B cell (primary cell): ENCODE measurements at regions of chr11 and their contacts with region 1.

Region 1: DNA sequence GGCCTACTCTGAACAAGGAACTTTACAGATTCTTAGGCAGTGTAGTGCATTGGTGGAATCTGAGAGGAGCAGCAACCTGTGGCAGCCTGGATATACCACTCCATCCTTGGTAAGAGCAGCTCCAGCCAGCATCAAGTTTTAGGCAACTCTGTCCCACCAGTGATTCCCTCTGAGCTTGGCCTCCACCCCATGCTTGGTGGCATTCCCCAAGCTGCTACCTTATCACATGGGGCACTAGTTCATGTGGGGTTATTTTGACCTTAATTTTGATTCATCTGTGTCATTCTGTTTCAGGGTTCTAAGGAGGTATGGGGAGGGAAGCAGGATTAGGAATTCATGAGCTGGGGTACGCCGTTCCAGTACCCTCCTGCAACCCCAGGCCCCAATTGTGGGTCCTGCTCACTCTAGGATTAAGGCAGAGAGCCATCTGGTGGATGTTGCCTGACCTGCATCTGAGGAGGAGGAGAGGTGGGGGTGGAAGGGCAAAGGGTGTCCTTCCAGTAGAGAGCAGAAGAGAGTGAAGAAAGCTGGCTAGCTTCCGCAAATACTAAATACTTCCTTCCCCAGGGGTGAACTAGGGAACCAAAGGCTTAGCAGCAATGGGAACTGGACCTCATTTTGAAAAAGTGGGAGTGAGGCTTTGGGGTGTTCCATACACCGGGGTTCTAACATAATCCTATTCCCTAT is 10.5 kb downstream of the LRRC51 start:
- DNase-seq: peak; percentile 85
- ATAC-seq: peak; percentile 99
- H3K4me3 ChIP-seq: no peak overlapping the region
- H3K4me3 Mint-ChIP-seq: no peak overlapping the region
- H3K27ac ChIP-seq: peak overlapping the region; percentile 7 to 25
- H3K27ac Mint-ChIP-seq: peak overlapping the region; percentile 73
- H3K4me1 ChIP-seq: peaks cover 7 to 14% of the 10 kb centered on the region in 2 donors
- H3K4me1 Mint-ChIP-seq: peaks cover 16% of the 10 kb centered on the region
- H3K27me3 ChIP-seq: no peaks in the 10 kb centered on the region
- H3K27me3 Mint-ChIP-seq: no peaks in the 10 kb centered on the region
- CTCF ChIP-seq: peak; percentile 82

Region 2: DNA sequence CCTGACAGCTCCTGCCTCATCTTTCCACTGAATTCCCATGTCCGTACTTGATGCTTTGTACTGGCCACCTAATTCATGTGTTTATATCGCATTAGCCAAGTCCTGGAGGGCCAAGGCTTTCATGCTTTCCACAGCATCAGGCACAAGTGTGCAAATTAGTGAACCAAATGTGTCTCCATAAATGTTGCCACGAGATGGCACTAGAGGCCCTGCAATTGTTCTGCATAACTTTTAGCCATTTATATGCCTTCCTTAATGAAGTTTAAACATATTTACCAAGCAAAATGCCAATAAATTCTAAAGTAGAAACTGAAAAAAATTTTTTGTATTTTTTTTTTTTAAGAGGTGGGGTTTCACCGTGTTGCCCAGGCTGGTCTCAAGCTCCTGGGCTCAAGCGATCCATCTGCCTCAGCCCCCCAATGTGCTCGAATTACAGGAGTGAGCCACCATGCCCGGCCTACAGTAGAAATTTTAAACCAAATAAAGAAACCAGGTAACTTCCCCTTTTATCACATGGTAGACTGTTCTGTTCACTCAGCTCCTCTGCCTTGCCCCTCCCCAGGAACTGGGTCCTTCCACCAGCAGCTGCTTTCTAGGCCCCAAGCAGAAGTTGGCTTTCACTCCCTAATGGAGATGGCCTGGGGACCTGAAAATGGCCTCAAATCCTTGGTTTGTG is 113.3 kb before region 1 on chr11:
- CTCF ChIA-PET with region 1: interaction called, 37 read pairs
- POLR2A ChIA-PET with region 1: no interaction called
- intact Hi-C with region 1: loop called (anchors 1 kb)
- DNase-seq: peak; percentile 86
- ATAC-seq: peak; percentile 96
- H3K4me3 ChIP-seq: no peak overlapping the region
- H3K4me3 Mint-ChIP-seq: peak overlapping the region; percentile 38
- H3K27ac ChIP-seq: peak overlapping the region; percentile 64 to 72
- H3K27ac Mint-ChIP-seq: peak overlapping the region; percentile 93
- H3K4me1 ChIP-seq: peaks cover 17 to 25% of the 10 kb centered on the region in 2 donors
- H3K4me1 Mint-ChIP-seq: peaks cover 25% of the 10 kb centered on the region
- H3K27me3 ChIP-seq: no peaks in the 10 kb centered on the region
- H3K27me3 Mint-ChIP-seq: no peaks in the 10 kb centered on the region
- CTCF ChIP-seq: peak; percentile 82

Region 3: GRCh38 chr11:72040726-72041441 is 50.3 kb before region 1 on chr11:
- CTCF ChIA-PET with region 1: interaction called, 292 read pairs
- POLR2A ChIA-PET with region 1: interaction called, 4 read pairs
- intact Hi-C with region 1: no loop called
- DNase-seq: peak; percentile 73
- ATAC-seq: peak; percentile 50
- H3K4me3 ChIP-seq: peak overlapping the region; percentile 72 to 86 (median 83)
- H3K4me3 Mint-ChIP-seq: no peak overlapping the region
- H3K27ac ChIP-seq: peak overlapping the region; percentile 72 to 92
- H3K27ac Mint-ChIP-seq: no peak overlapping the region
- H3K4me1 ChIP-seq: peaks cover 45 to 54% of the 10 kb centered on the region in 2 donors
- H3K4me1 Mint-ChIP-seq: peaks cover 30% of the 10 kb centered on the region
- H3K27me3 ChIP-seq: no peaks in the 10 kb centered on the region
- H3K27me3 Mint-ChIP-seq: no peaks in the 10 kb centered on the region
- CTCF ChIP-seq: no peak

Region 4: DNA sequence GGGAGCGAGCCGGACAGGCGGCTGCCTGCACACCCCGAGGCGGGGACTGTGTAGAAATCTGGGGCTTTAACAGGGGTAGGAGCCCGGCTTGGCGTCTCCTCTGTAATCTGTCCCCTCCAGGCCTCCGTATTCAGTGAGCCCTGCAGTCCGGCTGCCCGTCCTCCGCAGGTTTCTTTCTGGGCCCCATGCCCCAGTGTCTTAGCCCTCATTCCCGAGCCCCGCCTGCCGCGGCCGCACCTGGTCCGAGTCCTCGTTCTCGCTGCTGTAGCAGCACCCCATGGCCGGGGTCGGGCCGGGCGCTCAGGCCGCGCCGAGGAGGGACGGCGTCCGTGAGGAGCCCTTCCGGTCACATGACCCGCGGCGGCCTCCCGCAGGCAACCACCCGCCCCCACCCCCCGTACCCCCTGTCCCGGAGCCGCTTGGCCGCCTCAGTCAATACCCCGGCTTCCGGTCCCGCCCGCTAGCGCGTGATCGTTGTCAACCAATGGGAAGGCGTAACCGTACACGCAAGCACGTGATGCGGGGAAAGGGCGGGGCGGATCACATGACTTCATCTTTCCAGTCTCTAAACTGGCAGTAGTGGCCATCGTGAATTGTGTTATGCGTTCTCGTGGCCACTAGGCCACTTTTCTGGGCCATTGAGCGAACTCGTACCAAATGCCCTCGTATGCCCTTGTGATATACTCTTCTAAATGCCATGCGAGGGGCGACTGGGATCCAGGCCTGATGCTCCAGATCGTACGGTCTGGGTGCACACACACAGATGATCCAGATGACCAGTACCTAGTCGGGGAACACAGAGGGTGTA is 12.0 kb after region 1 on chr11 and contains the start of gene LAMTOR1:
- CTCF ChIA-PET with region 1: interaction called, 37 read pairs
- POLR2A ChIA-PET with region 1: no interaction called
- intact Hi-C with region 1: no loop called
- DNase-seq: peak; percentile 98
- ATAC-seq: peak; percentile 95
- H3K4me3 ChIP-seq: peak within 1 kb of the TSS; percentile 76 to 98 (median 84)
- H3K4me3 Mint-ChIP-seq: peak within 1 kb of the TSS; percentile 95
- H3K27ac ChIP-seq: peak within 1 kb of the TSS; percentile 94 to 96
- H3K27ac Mint-ChIP-seq: peak within 1 kb of the TSS; percentile 99
- H3K4me1 ChIP-seq: peaks cover 29 to 37% of the 10 kb centered on the region in 2 donors
- H3K4me1 Mint-ChIP-seq: peaks cover 41% of the 10 kb centered on the region
- H3K27me3 ChIP-seq: no peaks in the 10 kb centered on the region
- H3K27me3 Mint-ChIP-seq: no peaks in the 10 kb centered on the region
- CTCF ChIP-seq: peak; percentile 20
- total RNA-seq, gene LAMTOR1: 71.0 and 78.4 TPM in 2 replicates

Region 5: GRCh38 chr11:72141066-72141465 is 49.9 kb after region 1 on chr11:
- CTCF ChIA-PET with region 1: interaction called, 15 read pairs
- POLR2A ChIA-PET with region 1: interaction called, 4 read pairs
- intact Hi-C with region 1: no loop called
- DNase-seq: no peak
- ATAC-seq: no peak
- H3K4me3 ChIP-seq: no peak overlapping the region
- H3K4me3 Mint-ChIP-seq: no peak overlapping the region
- H3K27ac ChIP-seq: no peak overlapping the region
- H3K27ac Mint-ChIP-seq: no peak overlapping the region
- H3K4me1 ChIP-seq: no peaks in the 10 kb centered on the region
- H3K4me1 Mint-ChIP-seq: no peaks in the 10 kb centered on the region
- H3K27me3 ChIP-seq: peaks cover 0 to 3% (median 0%) of the 10 kb centered on the region in 4 experiments
- H3K27me3 Mint-ChIP-seq: peaks cover 19% of the 10 kb centered on the region
- CTCF ChIP-seq: no peak